ENCODE measurements at regions of chr1 and their contacts with region 1.

Region 1: DNA sequence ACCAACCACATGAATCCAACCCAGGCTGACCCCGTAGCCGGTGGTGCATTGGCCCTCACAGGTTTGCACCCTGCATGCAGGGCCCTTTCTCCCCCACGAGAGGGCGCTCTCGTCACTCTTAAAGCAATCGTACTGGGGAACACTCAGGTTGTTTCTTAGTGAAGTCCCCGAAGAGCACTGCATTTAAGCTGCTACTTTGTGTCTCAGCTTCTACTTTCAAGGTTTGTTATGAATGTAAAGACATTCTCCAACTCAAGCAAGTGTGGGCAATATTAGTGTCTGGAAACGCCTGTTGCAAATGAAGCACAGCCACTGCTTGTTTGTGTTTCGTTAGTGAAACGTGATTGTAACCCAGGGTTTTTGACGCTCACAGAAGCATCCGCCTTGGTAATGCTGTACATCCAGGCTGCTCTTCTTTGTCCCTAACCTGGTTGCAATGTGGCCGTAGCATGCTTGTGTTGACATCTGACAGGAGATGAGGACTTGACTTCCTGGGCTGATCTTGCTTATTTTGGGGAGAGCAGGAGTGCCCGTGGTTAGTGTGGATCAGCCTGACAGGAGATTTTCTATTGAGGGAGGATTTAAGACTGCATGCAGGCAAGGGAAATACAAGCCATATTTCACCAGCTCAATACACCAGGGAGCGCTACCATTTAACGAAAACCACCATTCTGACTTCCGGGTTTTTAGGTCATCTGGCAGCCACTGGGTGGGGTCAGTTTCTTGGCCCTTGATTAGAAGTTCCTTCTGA is 79.8 kb downstream of the ST6GALNAC3 start:
- DNase-seq: peak; percentile 53 to 90 (median 78)
- ATAC-seq: peak; percentile 91
- H3K4me3 ChIP-seq: peak overlapping the region; percentile 52 to 58
- H3K4me3 Mint-ChIP-seq: peak overlapping the region; percentile 89
- H3K27ac ChIP-seq: peak overlapping the region; percentile 31 to 56
- H3K27ac Mint-ChIP-seq: peak overlapping the region; percentile 86
- H3K4me1 ChIP-seq: peaks cover 6% of the 10 kb centered on the region
- H3K4me1 Mint-ChIP-seq: peaks cover 8% of the 10 kb centered on the region
- H3K27me3 ChIP-seq: no peaks in the 10 kb centered on the region
- H3K27me3 Mint-ChIP-seq: peaks cover 4% of the 10 kb centered on the region
- CTCF ChIP-seq: peak; percentile 90

Region 2: GRCh38 chr1:75991497-75992114 is 162.8 kb before region 1 on chr1:
- CTCF ChIA-PET with region 1: interaction called, 4 read pairs
- POLR2A ChIA-PET with region 1: no interaction called
- intact Hi-C with region 1: loop called (anchors 1 kb)
- DNase-seq: peak; percentile 22 to 80 (median 71)
- ATAC-seq: peak; percentile 34
- H3K4me3 ChIP-seq: no peak overlapping the region
- H3K4me3 Mint-ChIP-seq: no peak overlapping the region
- H3K27ac ChIP-seq: no peak overlapping the region
- H3K27ac Mint-ChIP-seq: no peak overlapping the region
- H3K4me1 ChIP-seq: no peaks in the 10 kb centered on the region
- H3K4me1 Mint-ChIP-seq: no peaks in the 10 kb centered on the region
- H3K27me3 ChIP-seq: peaks cover 0 to 2% of the 10 kb centered on the region in 2 experiments
- H3K27me3 Mint-ChIP-seq: peaks cover 3% of the 10 kb centered on the region
- CTCF ChIP-seq: peak; percentile 70

Region 3: GRCh38 chr1:76144247-76144646 is 10.1 kb before region 1 on chr1:
- CTCF ChIA-PET with region 1: interaction called, 16 read pairs
- POLR2A ChIA-PET with region 1: no interaction called
- intact Hi-C with region 1: no loop called
- DNase-seq: no peak
- ATAC-seq: no peak
- H3K4me3 ChIP-seq: no peak overlapping the region
- H3K4me3 Mint-ChIP-seq: no peak overlapping the region
- H3K27ac ChIP-seq: no peak overlapping the region
- H3K27ac Mint-ChIP-seq: no peak overlapping the region
- H3K4me1 ChIP-seq: no peaks in the 10 kb centered on the region
- H3K4me1 Mint-ChIP-seq: peaks cover 3% of the 10 kb centered on the region
- H3K27me3 ChIP-seq: no peaks in the 10 kb centered on the region
- H3K27me3 Mint-ChIP-seq: peaks cover 6% of the 10 kb centered on the region
- CTCF ChIP-seq: no peak

Region 4: DNA sequence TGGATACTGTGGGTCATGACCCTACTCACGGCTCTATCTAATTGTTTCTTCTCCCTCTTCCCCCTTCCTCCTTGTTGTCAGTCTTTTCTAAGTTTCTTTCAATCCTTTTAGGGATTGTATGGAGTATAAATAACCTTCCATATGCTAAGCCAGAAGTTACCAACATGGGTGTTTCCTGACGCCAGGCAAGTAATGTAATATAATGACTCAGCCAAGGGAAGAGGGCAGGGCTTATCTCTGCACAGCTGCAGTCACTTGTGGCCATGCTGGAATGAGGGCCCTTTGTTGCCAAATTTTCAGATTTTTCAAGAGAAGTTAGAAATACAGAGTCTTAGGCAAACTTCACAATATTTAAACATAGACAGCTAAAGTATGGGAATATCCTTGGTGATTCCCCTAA is 114.8 kb after region 1 on chr1:
- CTCF ChIA-PET with region 1: interaction called, 4 read pairs
- POLR2A ChIA-PET with region 1: no interaction called
- intact Hi-C with region 1: loop called in 1 of 2 experiments (anchors 10 kb)
- DNase-seq: peak in 2 of 9 experiments; percentile 7 to 35
- ATAC-seq: peak; percentile 48
- H3K4me3 ChIP-seq: no peak overlapping the region
- H3K4me3 Mint-ChIP-seq: peak overlapping the region; percentile 10
- H3K27ac ChIP-seq: peak overlapping the region in 1 of 2 experiments; percentile 17
- H3K27ac Mint-ChIP-seq: no peak overlapping the region
- H3K4me1 ChIP-seq: peaks cover 49% of the 10 kb centered on the region
- H3K4me1 Mint-ChIP-seq: peaks cover 51% of the 10 kb centered on the region
- H3K27me3 ChIP-seq: no peaks in the 10 kb centered on the region
- H3K27me3 Mint-ChIP-seq: no peaks in the 10 kb centered on the region
- CTCF ChIP-seq: no peak

Region 5: DNA sequence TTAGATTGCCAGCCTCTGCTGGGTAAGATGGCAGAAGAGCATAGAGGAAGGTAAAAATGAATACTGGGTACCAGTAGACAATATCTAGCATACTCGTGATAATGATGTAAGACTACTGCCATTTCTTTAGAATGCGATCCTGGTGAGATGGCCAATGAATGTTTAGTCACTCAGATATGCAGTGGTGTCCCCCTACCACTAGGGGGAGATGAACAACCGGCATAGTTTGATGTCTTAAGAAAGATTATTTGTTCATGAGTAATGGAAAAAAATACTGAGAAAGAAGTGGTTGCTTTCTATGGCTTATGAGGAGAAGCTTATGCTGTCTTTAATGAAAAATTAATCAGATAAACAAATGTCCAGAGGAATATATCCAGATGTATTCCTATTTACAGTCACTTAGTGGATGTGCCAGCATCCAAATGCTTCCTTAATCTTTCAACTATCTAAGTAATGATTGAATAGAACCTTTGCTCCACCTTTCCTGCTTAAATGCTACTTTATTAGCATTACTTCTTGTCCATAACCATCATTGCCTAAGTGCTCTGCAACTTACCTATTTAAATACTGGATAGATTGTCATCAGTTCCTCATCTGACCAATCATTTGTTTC is 176.7 kb after region 1 on chr1:
- CTCF ChIA-PET with region 1: interaction called, 6 read pairs
- POLR2A ChIA-PET with region 1: no interaction called
- intact Hi-C with region 1: loop called in 1 of 2 experiments (anchors 1 kb)
- DNase-seq: peak in 5 of 9 experiments; percentile 12 to 59 (median 33)
- ATAC-seq: peak; percentile 71
- H3K4me3 ChIP-seq: no peak overlapping the region
- H3K4me3 Mint-ChIP-seq: no peak overlapping the region
- H3K27ac ChIP-seq: no peak overlapping the region
- H3K27ac Mint-ChIP-seq: no peak overlapping the region
- H3K4me1 ChIP-seq: no peaks in the 10 kb centered on the region
- H3K4me1 Mint-ChIP-seq: peaks cover 4% of the 10 kb centered on the region
- H3K27me3 ChIP-seq: no peaks in the 10 kb centered on the region
- H3K27me3 Mint-ChIP-seq: no peaks in the 10 kb centered on the region
- CTCF ChIP-seq: peak; percentile 91

Region 6: DNA sequence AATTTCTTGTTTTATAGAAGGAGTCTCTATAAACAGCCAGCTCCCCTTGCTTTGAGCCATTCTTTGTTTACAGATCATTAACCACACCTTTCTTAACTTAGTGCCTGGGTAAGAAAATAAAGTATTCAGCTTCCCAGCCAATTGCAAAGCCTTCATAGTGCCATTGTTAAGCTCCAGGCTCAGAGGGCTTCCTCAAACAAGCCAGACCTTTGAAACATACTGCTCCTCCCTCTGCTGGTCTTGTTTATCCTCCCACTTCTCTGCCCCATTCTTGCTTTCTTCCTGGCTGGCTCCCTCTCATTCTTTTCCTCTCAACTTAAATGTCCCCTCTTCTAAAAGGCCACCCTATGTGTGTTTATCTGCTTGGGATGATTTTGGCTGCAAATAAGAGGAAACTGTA is 393.5 kb after region 1 on chr1:
- CTCF ChIA-PET with region 1: no interaction called
- POLR2A ChIA-PET with region 1: no interaction called
- intact Hi-C with region 1: no loop called
- DNase-seq: no peak
- ATAC-seq: no peak
- H3K4me3 ChIP-seq: no peak overlapping the region
- H3K4me3 Mint-ChIP-seq: no peak overlapping the region
- H3K27ac ChIP-seq: no peak overlapping the region
- H3K27ac Mint-ChIP-seq: no peak overlapping the region
- H3K4me1 ChIP-seq: no peaks in the 10 kb centered on the region
- H3K4me1 Mint-ChIP-seq: no peaks in the 10 kb centered on the region
- H3K27me3 ChIP-seq: no peaks in the 10 kb centered on the region
- H3K27me3 Mint-ChIP-seq: no peaks in the 10 kb centered on the region
- CTCF ChIP-seq: no peak

Region 7: GRCh38 chr1:77143529-77144121 is 989.2 kb after region 1 on chr1:
- CTCF ChIA-PET with region 1: interaction called, 29 read pairs
- POLR2A ChIA-PET with region 1: no interaction called
- intact Hi-C with region 1: loop called (anchors 1 kb)
- DNase-seq: peak in 2 of 9 experiments; percentile 15 to 28
- ATAC-seq: no peak
- H3K4me3 ChIP-seq: no peak overlapping the region
- H3K4me3 Mint-ChIP-seq: no peak overlapping the region
- H3K27ac ChIP-seq: no peak overlapping the region
- H3K27ac Mint-ChIP-seq: no peak overlapping the region
- H3K4me1 ChIP-seq: peaks cover 6% of the 10 kb centered on the region
- H3K4me1 Mint-ChIP-seq: peaks cover 5% of the 10 kb centered on the region
- H3K27me3 ChIP-seq: no peaks in the 10 kb centered on the region
- H3K27me3 Mint-ChIP-seq: no peaks in the 10 kb centered on the region
- CTCF ChIP-seq: peak; percentile 53

Region 8: DNA sequence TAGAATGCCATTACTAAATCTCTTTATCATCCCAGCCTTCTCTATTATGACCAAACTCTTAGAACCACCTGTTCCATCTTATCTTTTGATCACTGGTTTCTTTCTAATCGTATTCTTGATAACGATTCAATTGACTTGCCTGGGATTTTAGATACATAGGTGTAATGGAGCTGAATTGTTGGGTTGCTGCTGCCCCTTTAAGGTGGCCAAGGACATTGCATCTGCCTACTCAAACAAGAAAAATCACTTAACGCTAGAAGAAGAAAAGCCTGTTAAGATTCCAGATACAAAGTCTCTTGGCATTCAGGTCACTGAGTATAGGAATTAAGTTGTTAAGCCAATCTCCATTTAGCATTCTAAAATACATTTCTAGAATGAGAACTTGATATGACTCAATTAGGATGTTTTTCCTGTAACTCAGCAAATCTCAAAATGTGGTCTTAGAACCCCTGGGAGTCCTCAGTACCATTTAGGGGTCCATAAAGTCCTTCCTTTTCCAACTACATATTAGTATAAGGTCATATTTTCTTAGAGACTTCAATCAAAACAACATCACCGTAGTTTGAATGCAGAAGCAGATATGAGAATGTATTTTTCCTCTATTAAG is 1746.4 kb after region 1 on chr1:
- CTCF ChIA-PET with region 1: no interaction called
- POLR2A ChIA-PET with region 1: no interaction called
- intact Hi-C with region 1: loop called (anchors 10 kb)
- DNase-seq: peak in 2 of 9 experiments; percentile 22 to 44
- ATAC-seq: peak; percentile 34
- H3K4me3 ChIP-seq: no peak overlapping the region
- H3K4me3 Mint-ChIP-seq: no peak overlapping the region
- H3K27ac ChIP-seq: no peak overlapping the region
- H3K27ac Mint-ChIP-seq: no peak overlapping the region
- H3K4me1 ChIP-seq: no peaks in the 10 kb centered on the region
- H3K4me1 Mint-ChIP-seq: no peaks in the 10 kb centered on the region
- H3K27me3 ChIP-seq: no peaks in the 10 kb centered on the region
- H3K27me3 Mint-ChIP-seq: no peaks in the 10 kb centered on the region
- CTCF ChIP-seq: peak; percentile 41